ENCODE measurements at regions of chr16 and their contacts with region 1.

Region 1: GRCh38 chr16:79071424-79071823 is 529.1 kb downstream of the MAF start:
- DNase-seq: no peak
- H3K4me3 Mint-ChIP-seq: no peak overlapping the region
- H3K27ac Mint-ChIP-seq: no peak overlapping the region
- H3K4me1 Mint-ChIP-seq: peaks cover 75% of the 10 kb centered on the region
- H3K27me3 Mint-ChIP-seq: no peaks in the 10 kb centered on the region

Region 2: DNA sequence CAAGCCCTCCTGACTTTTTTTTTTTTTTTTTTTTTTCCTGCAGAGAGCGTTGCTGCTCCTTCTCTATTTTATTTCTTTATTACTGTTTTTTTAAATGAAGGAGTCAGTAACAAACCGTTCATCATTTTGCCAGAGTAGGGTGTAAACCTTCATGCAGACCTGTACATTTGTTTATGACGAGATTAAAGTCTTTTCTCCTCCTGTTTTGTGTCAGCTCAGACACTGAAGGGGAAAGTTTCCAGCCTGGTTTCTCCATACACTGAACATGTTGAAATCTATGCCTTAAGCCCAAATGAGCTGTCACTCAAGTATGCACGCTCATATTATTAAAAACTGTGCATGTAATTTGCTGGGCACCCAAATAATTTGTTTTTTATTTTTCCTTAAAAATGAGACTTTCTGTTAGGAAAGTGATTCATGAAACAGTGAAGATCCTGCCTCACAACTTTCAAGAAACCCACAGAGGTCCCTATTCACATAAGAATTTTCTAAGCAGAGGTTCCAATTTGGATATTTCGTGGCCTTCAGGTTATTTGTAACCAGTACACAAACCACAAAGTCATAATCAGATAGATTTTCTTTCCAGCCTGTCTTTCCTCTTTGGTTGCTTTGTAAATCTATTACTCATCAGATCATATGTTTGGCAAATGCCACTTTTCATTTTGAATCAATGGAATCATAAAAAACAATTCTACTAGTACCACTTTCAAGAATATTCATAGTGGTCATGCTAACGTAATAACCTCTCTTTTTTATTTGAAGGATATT is 171.2 kb before region 1 on chr16:
- intact Hi-C with region 1: loop called (anchors 1 kb)
- DNase-seq: no peak
- H3K4me3 Mint-ChIP-seq: no peak overlapping the region
- H3K27ac Mint-ChIP-seq: peak overlapping the region; percentile 28
- H3K4me1 Mint-ChIP-seq: peaks cover 37% of the 10 kb centered on the region
- H3K27me3 Mint-ChIP-seq: no peaks in the 10 kb centered on the region

Region 3: GRCh38 chr16:79037521-79038373 is 33.7 kb before region 1 on chr16:
- intact Hi-C with region 1: no loop called
- DNase-seq: no peak
- H3K4me3 Mint-ChIP-seq: no peak overlapping the region
- H3K27ac Mint-ChIP-seq: no peak overlapping the region
- H3K4me1 Mint-ChIP-seq: peaks cover 5% of the 10 kb centered on the region
- H3K27me3 Mint-ChIP-seq: no peaks in the 10 kb centered on the region

Region 4: GRCh38 chr16:79089735-79090284 is 18.4 kb after region 1 on chr16:
- intact Hi-C with region 1: loop called (anchors 1 kb)
- DNase-seq: peak; percentile 69
- H3K4me3 Mint-ChIP-seq: peak overlapping the region; percentile 51
- H3K27ac Mint-ChIP-seq: peak overlapping the region; percentile 89
- H3K4me1 Mint-ChIP-seq: peaks cover 53% of the 10 kb centered on the region
- H3K27me3 Mint-ChIP-seq: no peaks in the 10 kb centered on the region

Region 5: DNA sequence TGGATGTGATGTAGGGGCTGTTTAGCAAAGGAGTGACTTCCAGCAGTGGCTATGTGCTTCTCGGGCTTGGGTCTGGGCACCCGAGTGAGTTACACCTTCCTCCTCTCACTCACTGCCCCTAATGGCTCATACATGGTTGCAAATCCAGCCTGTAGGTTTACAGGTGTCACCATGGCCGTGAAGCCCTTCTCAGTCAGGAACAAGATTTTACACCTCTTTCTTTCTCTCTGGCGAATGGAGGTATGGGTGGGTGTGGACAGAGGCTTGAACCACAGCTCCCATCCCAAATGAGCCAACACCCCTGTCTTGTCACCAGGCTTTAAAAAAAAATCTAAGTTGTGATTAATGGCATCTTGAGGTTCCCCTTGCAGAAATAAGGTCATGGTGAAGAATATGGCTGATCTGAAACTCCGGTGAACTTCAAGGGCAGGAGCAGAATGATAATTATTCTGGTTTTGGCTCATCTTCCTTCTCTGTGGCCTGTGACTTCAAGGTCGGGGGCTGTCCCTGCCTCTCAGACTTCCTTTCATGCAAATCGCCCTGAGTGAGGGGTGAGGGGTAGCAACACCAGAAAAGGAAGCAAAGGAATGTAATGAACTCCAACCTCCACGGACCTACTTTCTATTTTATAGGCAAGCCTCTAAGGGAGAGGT is 197.9 kb after region 1 on chr16:
- intact Hi-C with region 1: loop called (anchors 1 kb)
- DNase-seq: peak; percentile 68
- H3K4me3 Mint-ChIP-seq: peak overlapping the region; percentile 38
- H3K27ac Mint-ChIP-seq: peak overlapping the region; percentile 87
- H3K4me1 Mint-ChIP-seq: peaks cover 89% of the 10 kb centered on the region
- H3K27me3 Mint-ChIP-seq: no peaks in the 10 kb centered on the region

Region 6: DNA sequence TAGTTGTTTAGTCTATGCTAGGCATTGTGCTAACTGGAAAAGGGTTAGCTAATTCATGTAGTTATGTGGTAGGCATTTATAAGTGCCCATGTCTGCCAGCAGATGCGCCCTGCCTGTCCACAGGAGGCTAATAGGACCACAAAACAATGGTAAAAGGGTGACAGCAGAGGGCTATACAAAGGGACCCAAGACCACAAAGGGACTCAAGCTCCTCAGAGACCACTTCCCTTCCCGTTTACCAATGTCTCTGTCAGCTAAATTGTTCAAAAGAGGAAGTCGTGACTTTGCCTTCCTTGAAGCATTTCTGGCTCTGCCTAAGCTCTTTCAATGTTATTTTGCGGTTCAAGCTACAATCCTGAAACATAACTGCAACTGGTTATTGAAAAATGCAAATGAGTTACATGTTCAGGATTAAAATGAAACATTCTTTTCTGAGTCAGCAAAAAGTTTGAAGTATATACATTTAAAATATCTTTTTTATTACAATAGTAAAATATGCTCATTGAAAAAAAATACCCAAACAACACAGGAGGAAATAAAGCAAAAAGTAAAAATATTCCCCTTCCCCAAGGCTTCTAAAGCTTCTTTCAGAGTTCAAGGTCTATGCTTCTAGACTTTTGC is 379.9 kb after region 1 on chr16:
- intact Hi-C with region 1: loop called (anchors 10 kb)
- DNase-seq: peak; percentile 9
- H3K4me3 Mint-ChIP-seq: no peak overlapping the region
- H3K27ac Mint-ChIP-seq: peak overlapping the region; percentile 58
- H3K4me1 Mint-ChIP-seq: peaks cover 19% of the 10 kb centered on the region
- H3K27me3 Mint-ChIP-seq: peaks cover 3% of the 10 kb centered on the region

Region 7: DNA sequence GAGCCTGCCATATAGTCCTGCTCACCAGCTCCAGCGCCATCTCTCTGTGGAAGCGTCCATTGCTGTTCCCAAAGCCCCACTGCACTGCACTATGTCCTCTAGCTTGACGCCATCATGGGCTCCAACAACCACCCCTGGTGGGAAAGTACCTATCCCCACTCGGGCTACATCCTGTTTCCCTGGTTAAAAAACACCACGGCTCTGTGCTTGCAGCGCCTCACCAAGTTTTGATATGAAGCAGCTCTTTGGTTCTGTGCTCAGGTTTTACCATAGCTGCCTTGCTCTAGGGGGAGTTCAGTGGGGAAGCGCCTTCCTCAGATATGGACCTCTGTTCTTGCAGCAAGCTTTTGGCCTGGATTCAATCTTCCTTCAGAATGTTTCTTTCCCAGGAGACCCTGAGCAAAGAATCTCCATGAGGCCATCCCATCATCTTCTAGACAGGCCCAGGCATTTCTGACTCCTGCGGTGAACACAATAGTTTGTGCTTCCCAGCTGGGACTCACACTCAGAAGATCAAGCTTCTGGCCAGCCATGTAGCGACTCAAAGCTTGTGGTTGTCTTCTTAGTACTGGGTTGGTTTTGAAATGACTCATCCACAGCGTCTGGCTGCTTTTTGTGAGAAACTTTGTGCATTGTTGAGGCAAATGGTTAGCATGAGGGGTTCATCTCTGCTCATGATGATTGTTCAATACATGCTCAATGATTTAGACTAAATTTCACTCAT is 1508.8 kb after region 1 on chr16:
- intact Hi-C with region 1: loop called (anchors 10 kb)
- DNase-seq: peak; percentile 76
- H3K4me3 Mint-ChIP-seq: peak overlapping the region; percentile 82
- H3K27ac Mint-ChIP-seq: peak overlapping the region; percentile 99
- H3K4me1 Mint-ChIP-seq: peaks cover 51% of the 10 kb centered on the region
- H3K27me3 Mint-ChIP-seq: no peaks in the 10 kb centered on the region